ENCODE measurements at regions of chr4 and their contacts with region 1.

Region 1: DNA sequence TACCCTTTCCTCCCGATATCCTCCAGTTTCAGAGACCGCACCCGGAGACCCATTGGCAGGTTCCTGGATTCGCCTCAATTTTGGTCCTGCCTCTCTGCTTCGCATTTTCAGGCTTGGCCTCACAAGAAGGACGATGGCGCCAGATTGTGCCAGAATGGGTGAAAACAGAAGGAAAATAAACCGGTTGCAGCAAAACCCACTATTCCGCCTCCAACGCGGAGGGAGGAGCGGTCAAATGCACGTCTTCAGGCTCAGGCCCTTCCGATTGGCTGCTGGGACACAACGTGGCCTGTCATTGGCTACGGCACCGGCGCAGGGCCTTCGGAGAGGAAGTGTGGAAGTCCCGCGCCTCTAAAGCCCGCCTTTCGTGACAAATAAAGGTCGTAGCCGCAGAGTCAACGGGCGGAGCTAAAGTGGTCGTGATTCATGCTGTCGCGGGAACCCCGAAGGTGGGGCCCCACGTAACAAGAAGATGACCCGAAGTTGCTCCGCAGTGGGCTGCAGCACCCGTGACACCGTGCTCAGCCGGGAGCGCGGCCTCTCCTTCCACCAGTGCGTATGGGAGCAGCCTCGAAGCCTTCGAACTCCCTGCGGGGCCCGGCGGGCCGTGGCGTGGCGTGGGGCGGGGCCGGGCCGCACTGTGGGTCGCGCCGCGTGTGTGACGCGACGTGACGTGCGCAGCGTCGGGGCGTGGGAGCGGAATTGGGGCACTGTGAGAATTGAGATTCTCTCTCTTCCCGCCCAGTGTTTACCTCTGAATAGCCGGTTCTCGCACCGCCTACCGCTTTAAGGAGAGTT is at the start of gene THAP9:
- DNase-seq: peak; percentile 95 to 99
- ATAC-seq: peak; percentile 82 to 96 (median 86)
- H3K4me3 ChIP-seq: peak within 1 kb of the TSS; percentile 91
- H3K4me3 Mint-ChIP-seq: no peak within 1 kb of the TSS
- H3K27ac ChIP-seq: peak within 1 kb of the TSS; percentile 100
- H3K27ac Mint-ChIP-seq: no peak within 1 kb of the TSS
- H3K4me1 ChIP-seq: peaks cover 5% of the 10 kb centered on the region
- H3K4me1 Mint-ChIP-seq: peaks cover 10 to 11% of the 10 kb centered on the region in 2 donors
- H3K27me3 ChIP-seq: no peaks in the 10 kb centered on the region
- H3K27me3 Mint-ChIP-seq: no peaks in the 10 kb centered on the region
- CTCF ChIP-seq: no peak
- total RNA-seq, gene THAP9: 1.6 to 2.6 (median 2.1) TPM

Region 2: DNA sequence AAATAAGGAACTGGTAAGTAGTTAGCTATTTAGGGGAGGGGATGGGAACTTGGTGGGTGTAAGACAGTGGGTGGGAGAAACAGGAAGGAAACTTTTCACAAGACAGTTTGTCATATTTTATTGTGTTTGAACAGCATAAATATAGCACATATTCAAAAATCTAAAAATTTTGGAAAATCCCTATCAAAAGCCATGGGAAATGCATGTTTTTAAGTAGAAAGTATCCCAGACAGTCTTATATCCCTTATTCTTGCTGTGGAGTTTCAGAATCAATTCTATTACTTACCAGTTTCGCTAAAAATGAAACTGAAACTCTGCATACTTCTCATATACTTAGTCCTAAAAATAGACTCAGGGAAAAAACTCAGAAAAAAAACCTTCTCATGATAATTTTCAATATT is 1406.5 kb before region 1 on chr4:
- intact Hi-C with region 1: loop called (anchors 10 kb)
- DNase-seq: peak in 1 of 2 donors; percentile 65
- ATAC-seq: peak; percentile 21 to 47 (median 42)
- H3K4me3 ChIP-seq: peak overlapping the region; percentile 29
- H3K4me3 Mint-ChIP-seq: peak overlapping the region; percentile 93
- H3K27ac ChIP-seq: peak overlapping the region; percentile 73
- H3K27ac Mint-ChIP-seq: peak overlapping the region; percentile 92
- H3K4me1 ChIP-seq: peaks cover 19% of the 10 kb centered on the region
- H3K4me1 Mint-ChIP-seq: peaks cover 47 to 55% of the 10 kb centered on the region in 2 donors
- H3K27me3 ChIP-seq: no peaks in the 10 kb centered on the region
- H3K27me3 Mint-ChIP-seq: no peaks in the 10 kb centered on the region
- CTCF ChIP-seq: no peak

Region 3: DNA sequence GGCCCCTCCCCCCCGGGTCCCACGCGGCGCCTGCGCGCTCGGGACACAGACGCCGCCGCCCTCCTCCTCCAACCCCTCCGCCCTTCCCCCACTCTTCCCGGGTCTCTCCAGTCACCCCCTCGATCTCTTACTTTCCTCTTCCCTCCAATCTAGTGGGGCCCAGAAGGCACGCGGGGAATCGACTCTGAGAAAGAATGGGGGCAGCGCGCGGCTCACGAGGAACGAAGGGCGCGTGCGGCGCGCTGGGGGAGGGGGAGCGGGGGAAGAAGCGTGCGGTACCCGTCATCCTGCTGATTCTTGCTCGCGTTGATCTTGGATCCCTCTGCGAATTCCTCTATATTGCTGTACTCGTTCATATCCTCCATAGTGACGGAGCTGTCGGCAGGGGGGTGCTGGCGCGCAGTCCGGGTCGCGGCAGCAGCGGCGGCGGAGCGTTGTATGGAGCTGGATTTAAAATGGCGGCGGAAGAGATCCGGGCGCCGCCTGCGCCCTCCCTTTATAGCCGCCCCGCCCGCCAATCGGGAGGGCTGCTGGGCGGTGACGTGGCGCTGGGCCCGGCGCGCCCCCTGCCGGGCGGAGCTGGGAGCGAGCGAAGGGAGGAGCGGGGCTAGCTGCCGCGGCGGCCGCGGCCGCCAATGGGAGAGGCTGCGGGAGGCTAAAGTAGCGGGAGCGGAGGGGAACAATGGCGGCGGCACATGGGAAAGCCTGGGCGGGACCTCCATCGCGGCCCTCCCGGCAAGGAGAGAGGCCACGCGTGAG is 471.4 kb before region 1 on chr4:
- intact Hi-C with region 1: loop called (anchors 2 kb)
- DNase-seq: peak; percentile 94 to 97
- ATAC-seq: peak; percentile 67 to 87 (median 70)
- H3K4me3 ChIP-seq: peak overlapping the region; percentile 100
- H3K4me3 Mint-ChIP-seq: peak overlapping the region; percentile 100
- H3K27ac ChIP-seq: peak overlapping the region; percentile 100
- H3K27ac Mint-ChIP-seq: peak overlapping the region; percentile 96
- H3K4me1 ChIP-seq: peaks cover 15% of the 10 kb centered on the region
- H3K4me1 Mint-ChIP-seq: peaks cover 46 to 60% of the 10 kb centered on the region in 2 donors
- H3K27me3 ChIP-seq: no peaks in the 10 kb centered on the region
- H3K27me3 Mint-ChIP-seq: no peaks in the 10 kb centered on the region
- CTCF ChIP-seq: peak; percentile 94

Region 4: DNA sequence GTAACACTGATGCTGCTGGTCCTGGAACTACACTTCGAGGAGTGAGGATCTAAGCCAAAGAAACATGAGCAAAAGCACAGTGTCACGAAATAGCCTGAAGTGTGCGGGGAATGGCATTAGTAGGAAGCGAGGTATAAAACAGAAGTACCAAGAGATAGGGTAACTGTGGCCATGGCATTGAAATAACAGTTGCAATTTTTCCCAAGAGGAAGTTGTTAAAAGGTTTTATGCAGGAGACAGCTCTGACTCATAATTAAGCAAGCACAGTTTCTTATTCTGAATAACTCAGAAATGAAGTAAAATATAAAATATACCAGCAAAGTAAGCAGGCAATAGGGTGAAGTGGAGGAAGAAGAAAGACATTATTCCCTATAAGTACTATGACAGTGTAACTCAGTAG is 248.5 kb before region 1 on chr4:
- intact Hi-C with region 1: no loop called
- DNase-seq: no peak
- ATAC-seq: no peak
- H3K4me3 ChIP-seq: no peak overlapping the region
- H3K4me3 Mint-ChIP-seq: no peak overlapping the region
- H3K27ac ChIP-seq: no peak overlapping the region
- H3K27ac Mint-ChIP-seq: no peak overlapping the region
- H3K4me1 ChIP-seq: no peaks in the 10 kb centered on the region
- H3K4me1 Mint-ChIP-seq: peaks cover 0 to 5% of the 10 kb centered on the region in 2 donors
- H3K27me3 ChIP-seq: no peaks in the 10 kb centered on the region
- H3K27me3 Mint-ChIP-seq: no peaks in the 10 kb centered on the region
- CTCF ChIP-seq: no peak

Region 5: GRCh38 chr4:82957045-82957444 is 56.5 kb after region 1 on chr4:
- intact Hi-C with region 1: no loop called
- DNase-seq: no peak
- ATAC-seq: no peak
- H3K4me3 ChIP-seq: no peak overlapping the region
- H3K4me3 Mint-ChIP-seq: no peak overlapping the region
- H3K27ac ChIP-seq: no peak overlapping the region
- H3K27ac Mint-ChIP-seq: peak overlapping the region in 1 of 2 donors; percentile 5
- H3K4me1 ChIP-seq: no peaks in the 10 kb centered on the region
- H3K4me1 Mint-ChIP-seq: peaks cover 5 to 14% of the 10 kb centered on the region in 2 donors
- H3K27me3 ChIP-seq: no peaks in the 10 kb centered on the region
- H3K27me3 Mint-ChIP-seq: no peaks in the 10 kb centered on the region
- CTCF ChIP-seq: no peak

Region 6: DNA sequence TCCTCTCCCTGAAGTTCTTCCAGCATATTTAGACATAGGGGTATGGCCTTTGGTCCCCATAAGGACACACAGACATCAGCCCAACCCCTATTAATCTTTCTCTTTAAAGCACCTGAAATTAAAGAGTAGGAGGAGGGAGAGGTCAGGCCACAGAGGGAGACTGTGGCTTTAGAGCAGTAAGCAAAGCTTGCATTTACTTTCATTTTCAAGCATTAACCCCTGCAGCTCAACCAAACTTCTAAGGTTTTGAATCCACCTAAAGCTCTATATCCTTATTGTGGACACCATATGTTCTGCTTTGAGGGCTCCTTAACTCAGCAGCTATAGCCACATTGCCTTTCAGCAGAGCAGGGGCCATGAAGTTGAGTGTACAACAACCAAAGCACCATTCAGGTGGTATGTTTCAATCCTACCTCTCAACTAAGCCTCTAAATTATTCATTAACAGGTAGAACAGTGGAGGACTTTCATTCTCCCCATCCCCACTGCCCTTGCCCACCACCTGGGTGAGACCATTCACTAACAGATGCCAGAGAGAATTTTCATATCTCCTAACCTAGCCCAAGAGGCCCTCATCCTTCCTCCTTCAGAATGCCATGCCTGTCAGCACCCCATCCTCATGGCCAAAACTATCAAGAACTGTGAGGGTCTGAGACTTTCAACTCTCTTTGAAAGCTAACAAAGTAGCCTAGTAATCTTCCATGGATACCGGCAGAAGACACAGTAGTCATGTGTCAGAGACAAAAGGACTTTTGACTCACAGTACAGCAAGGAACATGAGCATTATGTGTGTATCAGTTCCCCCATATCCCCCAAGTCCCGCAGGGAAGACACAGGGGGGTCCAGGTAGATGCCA is 89.3 kb after region 1 on chr4:
- intact Hi-C with region 1: loop called (anchors 5 kb)
- DNase-seq: peak in 1 of 2 donors; percentile 38
- ATAC-seq: peak; percentile 59 to 73 (median 63)
- H3K4me3 ChIP-seq: no peak overlapping the region
- H3K4me3 Mint-ChIP-seq: peak overlapping the region; percentile 60
- H3K27ac ChIP-seq: peak overlapping the region; percentile 55
- H3K27ac Mint-ChIP-seq: peak overlapping the region; percentile 77 to 87
- H3K4me1 ChIP-seq: peaks cover 25% of the 10 kb centered on the region
- H3K4me1 Mint-ChIP-seq: peaks cover 25 to 29% of the 10 kb centered on the region in 2 donors
- H3K27me3 ChIP-seq: no peaks in the 10 kb centered on the region
- H3K27me3 Mint-ChIP-seq: no peaks in the 10 kb centered on the region
- CTCF ChIP-seq: no peak

Region 7: GRCh38 chr4:83217721-83218522 is 317.4 kb after region 1 on chr4:
- intact Hi-C with region 1: loop called (anchors 5 kb)
- DNase-seq: peak; percentile 60 to 90
- ATAC-seq: peak; percentile 80 to 95 (median 93)
- H3K4me3 ChIP-seq: no peak overlapping the region
- H3K4me3 Mint-ChIP-seq: peak overlapping the region; percentile 77
- H3K27ac ChIP-seq: peak overlapping the region; percentile 88
- H3K27ac Mint-ChIP-seq: peak overlapping the region; percentile 83 to 96
- H3K4me1 ChIP-seq: peaks cover 81% of the 10 kb centered on the region
- H3K4me1 Mint-ChIP-seq: peaks cover 92 to 94% of the 10 kb centered on the region in 2 donors
- H3K27me3 ChIP-seq: no peaks in the 10 kb centered on the region
- H3K27me3 Mint-ChIP-seq: no peaks in the 10 kb centered on the region
- CTCF ChIP-seq: no peak

Region 8: DNA sequence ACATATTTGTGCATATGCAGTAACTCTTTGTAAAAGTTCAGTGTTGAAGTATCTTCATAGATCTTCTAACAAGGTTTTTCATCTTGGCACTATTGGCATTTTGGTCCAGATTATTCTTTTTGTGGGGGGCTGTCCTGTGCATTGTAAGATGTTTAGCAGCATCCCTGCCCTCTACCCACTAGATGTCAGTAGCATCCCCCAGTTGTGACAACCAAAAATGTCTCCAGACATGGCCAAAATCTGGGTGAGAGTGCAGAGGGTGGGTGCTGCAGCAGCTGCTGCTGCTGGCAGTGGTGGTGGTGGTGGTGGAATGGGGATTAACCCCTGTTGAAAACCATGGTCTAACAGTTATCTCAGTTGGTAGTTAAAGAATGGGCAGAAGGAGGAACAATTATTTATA is 1005.4 kb after region 1 on chr4:
- intact Hi-C with region 1: no loop called
- DNase-seq: no peak
- ATAC-seq: no peak
- H3K4me3 ChIP-seq: no peak overlapping the region
- H3K4me3 Mint-ChIP-seq: no peak overlapping the region
- H3K27ac ChIP-seq: no peak overlapping the region
- H3K27ac Mint-ChIP-seq: no peak overlapping the region
- H3K4me1 ChIP-seq: no peaks in the 10 kb centered on the region
- H3K4me1 Mint-ChIP-seq: no peaks in the 10 kb centered on the region
- H3K27me3 ChIP-seq: no peaks in the 10 kb centered on the region
- H3K27me3 Mint-ChIP-seq: no peaks in the 10 kb centered on the region
- CTCF ChIP-seq: no peak